ENCODE measurements at regions of chr6 and their contacts with region 1.

Region 1: GRCh38 chr6:139028658-139029469 is at the start of gene ABRACL:
- DNase-seq: peak; percentile 83
- ATAC-seq: peak; percentile 71
- H3K4me3 Mint-ChIP-seq: no peak within 1 kb of the TSS
- H3K27ac Mint-ChIP-seq: peak within 1 kb of the TSS; percentile 95
- H3K4me1 Mint-ChIP-seq: peaks cover 14% of the 10 kb centered on the region
- H3K27me3 Mint-ChIP-seq: no peaks in the 10 kb centered on the region
- CTCF ChIP-seq: no peak
- total RNA-seq, gene ABRACL: 63.5 and 63.8 TPM in 2 replicates

Region 2: GRCh38 chr6:138692058-138692977 is 336.5 kb before region 1 on chr6:
- CTCF ChIA-PET with region 1: no interaction called
- POLR2A ChIA-PET with region 1: no interaction called
- intact Hi-C with region 1: loop called (anchors 5 kb)
- DNase-seq: peak; percentile 75
- ATAC-seq: peak; percentile 79
- H3K4me3 Mint-ChIP-seq: peak overlapping the region; percentile 87
- H3K27ac Mint-ChIP-seq: no peak overlapping the region
- H3K4me1 Mint-ChIP-seq: peaks cover 11% of the 10 kb centered on the region
- H3K27me3 Mint-ChIP-seq: peaks cover 31% of the 10 kb centered on the region
- CTCF ChIP-seq: peak; percentile 63

Region 3: GRCh38 chr6:138817822-138818308 is 211.0 kb before region 1 on chr6:
- CTCF ChIA-PET with region 1: no interaction called
- POLR2A ChIA-PET with region 1: interaction called, 3 read pairs
- intact Hi-C with region 1: loop called (anchors 2 kb)
- DNase-seq: no peak
- ATAC-seq: no peak
- H3K4me3 Mint-ChIP-seq: no peak overlapping the region
- H3K27ac Mint-ChIP-seq: peak overlapping the region; percentile 70
- H3K4me1 Mint-ChIP-seq: peaks cover 32% of the 10 kb centered on the region
- H3K27me3 Mint-ChIP-seq: no peaks in the 10 kb centered on the region
- CTCF ChIP-seq: no peak

Region 4: DNA sequence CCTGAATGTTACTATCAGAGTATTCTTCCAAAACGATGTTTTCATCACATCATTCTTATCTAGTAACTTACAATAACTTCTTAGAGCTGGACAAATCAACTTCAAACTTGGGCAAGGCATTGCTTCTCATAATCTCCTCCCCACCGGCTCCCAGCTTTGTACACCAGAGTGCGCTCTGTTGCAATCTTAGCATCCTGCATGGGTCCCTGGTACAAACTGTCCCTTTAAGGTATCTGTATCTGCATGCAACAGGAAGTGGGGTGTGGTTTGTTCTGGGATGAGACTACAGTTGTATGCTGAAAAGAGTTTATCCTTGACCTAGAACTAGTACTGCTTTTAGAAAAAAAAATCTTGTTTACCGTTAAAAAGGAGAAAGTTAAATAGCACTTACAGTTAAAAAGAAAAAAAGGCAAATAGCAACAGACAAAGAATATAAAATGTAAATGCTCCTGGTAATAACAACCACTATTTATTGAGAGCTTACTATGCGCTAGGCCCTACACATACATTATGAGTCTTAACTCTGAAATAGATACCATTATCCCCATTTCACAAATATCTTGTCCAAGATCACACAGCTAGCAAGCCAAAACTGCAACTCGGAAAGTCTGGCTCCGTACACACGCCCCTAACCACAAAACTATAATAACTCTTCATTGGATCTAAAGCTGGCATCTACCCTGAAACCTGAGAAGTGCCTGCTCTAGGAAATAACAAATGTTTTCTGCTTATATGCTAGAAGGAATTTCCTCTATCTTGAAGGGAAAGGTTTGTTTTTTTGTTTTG is 96.2 kb after region 1 on chr6:
- CTCF ChIA-PET with region 1: no interaction called
- POLR2A ChIA-PET with region 1: interaction called, 8 read pairs
- intact Hi-C with region 1: loop called (anchors 2 kb)
- DNase-seq: peak; percentile 42
- ATAC-seq: peak; percentile 100
- H3K4me3 Mint-ChIP-seq: peak overlapping the region; percentile 62
- H3K27ac Mint-ChIP-seq: peak overlapping the region; percentile 88
- H3K4me1 Mint-ChIP-seq: peaks cover 38% of the 10 kb centered on the region
- H3K27me3 Mint-ChIP-seq: no peaks in the 10 kb centered on the region
- CTCF ChIP-seq: no peak

Region 5: GRCh38 chr6:139271056-139271455 is 242.2 kb after region 1 on chr6:
- CTCF ChIA-PET with region 1: no interaction called
- POLR2A ChIA-PET with region 1: interaction called, 6 read pairs
- intact Hi-C with region 1: loop called (anchors 5 kb)
- DNase-seq: no peak
- ATAC-seq: peak; percentile 94
- H3K4me3 Mint-ChIP-seq: peak overlapping the region; percentile 75
- H3K27ac Mint-ChIP-seq: peak overlapping the region; percentile 96
- H3K4me1 Mint-ChIP-seq: peaks cover 80% of the 10 kb centered on the region
- H3K27me3 Mint-ChIP-seq: no peaks in the 10 kb centered on the region
- CTCF ChIP-seq: no peak

Measured in activated B cell treated with CpG ODN at 0.5 μM for 24 hours (primary cell).